CD14-positive monocyte (primary cell): ENCODE measurements at regions of chr12 and their contacts with region 1.

Region 1: DNA sequence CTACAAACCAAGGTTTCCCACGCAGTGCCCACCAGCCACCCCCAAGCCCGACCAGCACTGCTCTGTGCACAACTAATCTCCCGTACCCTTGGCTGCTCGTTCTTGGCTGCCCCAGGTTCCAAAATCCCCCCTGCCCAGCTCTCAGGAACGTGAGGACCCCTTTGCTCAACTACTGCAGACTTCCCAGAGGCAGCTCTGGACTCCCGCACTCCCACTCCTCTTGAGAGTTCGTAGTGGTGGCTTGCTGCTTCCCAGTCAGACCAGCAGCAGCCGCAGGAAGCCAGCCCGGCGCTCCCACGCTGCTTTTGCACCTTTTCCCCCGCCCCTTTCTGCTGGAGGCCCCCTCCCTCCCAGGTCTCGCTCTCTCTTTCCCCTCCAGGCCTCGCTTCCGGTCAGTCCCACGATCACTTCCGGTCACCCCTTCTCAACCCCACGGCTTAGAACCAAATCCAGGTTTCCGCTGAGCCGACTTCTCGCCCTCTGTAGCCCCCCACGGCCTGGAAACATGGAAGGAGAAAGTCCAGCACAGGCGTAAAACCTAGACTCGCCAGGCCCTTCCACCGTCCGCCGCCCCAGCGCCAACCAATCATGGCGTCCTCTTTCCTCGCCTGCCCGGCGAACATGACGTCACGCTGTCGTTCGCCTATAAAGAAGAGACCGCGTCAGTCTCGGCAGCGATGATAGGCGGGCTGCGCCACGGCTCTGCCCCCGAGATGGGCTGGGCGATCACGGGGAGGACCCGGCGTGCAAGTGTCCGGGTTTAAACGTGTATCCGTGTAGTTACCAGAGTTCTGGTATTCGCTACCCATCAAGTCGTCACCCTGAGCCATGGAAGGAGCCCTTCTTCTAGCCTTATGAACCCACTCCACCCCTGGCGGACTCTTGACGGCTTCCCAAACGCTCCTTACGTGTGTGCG is at the start of gene TFCP2:
- DNase-seq: peak; percentile 96 to 97 (median 97)
- H3K4me3 ChIP-seq: peak within 1 kb of the TSS; percentile 51 to 98 (median 66)
- H3K4me3 Mint-ChIP-seq: no peak within 1 kb of the TSS
- H3K27ac ChIP-seq: peak within 1 kb of the TSS; percentile 92 to 100
- H3K27ac Mint-ChIP-seq: no peak within 1 kb of the TSS
- H3K4me1 ChIP-seq: peaks cover 33 to 35% of the 10 kb centered on the region in 2 donors
- H3K4me1 Mint-ChIP-seq: peaks cover 18% of the 10 kb centered on the region
- H3K27me3 ChIP-seq: no peaks in the 10 kb centered on the region
- H3K27me3 Mint-ChIP-seq: no peaks in the 10 kb centered on the region
- CTCF ChIP-seq: no peak
- polyA plus RNA-seq, gene TFCP2: 7.1 to 25.4 (median 14.2) TPM

Region 2: DNA sequence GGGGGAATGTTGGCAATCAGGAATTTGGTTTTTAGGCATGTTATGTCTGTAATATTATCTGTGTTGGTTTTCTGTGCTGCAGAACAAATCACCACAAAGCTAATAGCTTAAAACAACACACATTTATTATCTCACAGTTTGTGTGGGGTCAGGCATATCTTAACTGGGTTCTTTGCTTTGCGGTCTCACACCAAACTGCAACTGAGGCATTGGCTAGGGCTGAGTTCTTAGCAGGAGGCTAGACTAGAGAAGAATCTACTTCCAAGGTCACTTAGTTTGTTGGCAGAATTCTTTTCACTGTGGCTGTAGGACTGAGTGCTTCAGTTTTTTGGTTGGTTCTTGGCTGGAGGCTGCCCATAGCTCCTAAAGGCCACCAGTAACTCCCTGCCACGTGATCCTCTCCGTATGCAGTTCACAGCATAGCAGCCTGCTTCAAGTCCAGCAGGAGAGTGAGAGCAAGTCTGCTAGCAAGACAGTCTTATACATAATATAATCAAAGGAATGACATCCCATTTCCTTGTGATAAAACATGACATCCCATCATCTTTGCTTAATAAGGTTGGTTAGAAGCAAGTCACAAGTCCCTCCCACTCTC is 387.3 kb before region 1 on chr12:
- intact Hi-C with region 1: no loop called
- DNase-seq: no peak
- H3K4me3 ChIP-seq: no peak overlapping the region
- H3K4me3 Mint-ChIP-seq: no peak overlapping the region
- H3K27ac ChIP-seq: no peak overlapping the region
- H3K27ac Mint-ChIP-seq: peak overlapping the region in 1 of 7 donors; percentile 30
- H3K4me1 ChIP-seq: no peaks in the 10 kb centered on the region
- H3K4me1 Mint-ChIP-seq: peaks cover 7% of the 10 kb centered on the region
- H3K27me3 ChIP-seq: no peaks in the 10 kb centered on the region
- H3K27me3 Mint-ChIP-seq: no peaks in the 10 kb centered on the region
- CTCF ChIP-seq: no peak

Region 3: GRCh38 chr12:51047655-51048540 is 124.9 kb before region 1 on chr12 and contains the start of gene LETMD1:
- intact Hi-C with region 1: loop called (anchors 5 to 10 kb)
- DNase-seq: peak; percentile 94 to 98 (median 97)
- H3K4me3 ChIP-seq: peak within 1 kb of the TSS; percentile 67 to 88 (median 85)
- H3K4me3 Mint-ChIP-seq: peak within 1 kb of the TSS; percentile 93 to 98
- H3K27ac ChIP-seq: peak within 1 kb of the TSS; percentile 90
- H3K27ac Mint-ChIP-seq: peak within 1 kb of the TSS; percentile 87 to 97 (median 94)
- H3K4me1 ChIP-seq: peaks cover 18 to 22% of the 10 kb centered on the region in 2 donors
- H3K4me1 Mint-ChIP-seq: peaks cover 19% of the 10 kb centered on the region
- H3K27me3 ChIP-seq: no peaks in the 10 kb centered on the region
- H3K27me3 Mint-ChIP-seq: peaks cover 0 to 5% (median 0%) of the 10 kb centered on the region in 3 donors
- CTCF ChIP-seq: peak; percentile 92
- polyA plus RNA-seq, gene LETMD1: 13.2 to 95.6 (median 16.8) TPM

Region 4: GRCh38 chr12:51238510-51239334 is 65.9 kb after region 1 on chr12 and contains the start of gene DAZAP2:
- intact Hi-C with region 1: loop called (anchors 10 kb)
- DNase-seq: peak; percentile 95 to 97 (median 96)
- H3K4me3 ChIP-seq: peak within 1 kb of the TSS; percentile 65 to 94 (median 93)
- H3K4me3 Mint-ChIP-seq: peak within 1 kb of the TSS; percentile 92 to 97
- H3K27ac ChIP-seq: peak within 1 kb of the TSS; percentile 99 to 100
- H3K27ac Mint-ChIP-seq: peak within 1 kb of the TSS; percentile 97 to 100 (median 100)
- H3K4me1 ChIP-seq: peaks cover 48 to 51% of the 10 kb centered on the region in 2 donors
- H3K4me1 Mint-ChIP-seq: peaks cover 43% of the 10 kb centered on the region
- H3K27me3 ChIP-seq: no peaks in the 10 kb centered on the region
- H3K27me3 Mint-ChIP-seq: peaks cover 0 to 2% (median 2%) of the 10 kb centered on the region in 3 donors
- CTCF ChIP-seq: peak; percentile 20
- polyA plus RNA-seq, gene DAZAP2: 975 to 2,004 (median 1,697) TPM

Region 5: DNA sequence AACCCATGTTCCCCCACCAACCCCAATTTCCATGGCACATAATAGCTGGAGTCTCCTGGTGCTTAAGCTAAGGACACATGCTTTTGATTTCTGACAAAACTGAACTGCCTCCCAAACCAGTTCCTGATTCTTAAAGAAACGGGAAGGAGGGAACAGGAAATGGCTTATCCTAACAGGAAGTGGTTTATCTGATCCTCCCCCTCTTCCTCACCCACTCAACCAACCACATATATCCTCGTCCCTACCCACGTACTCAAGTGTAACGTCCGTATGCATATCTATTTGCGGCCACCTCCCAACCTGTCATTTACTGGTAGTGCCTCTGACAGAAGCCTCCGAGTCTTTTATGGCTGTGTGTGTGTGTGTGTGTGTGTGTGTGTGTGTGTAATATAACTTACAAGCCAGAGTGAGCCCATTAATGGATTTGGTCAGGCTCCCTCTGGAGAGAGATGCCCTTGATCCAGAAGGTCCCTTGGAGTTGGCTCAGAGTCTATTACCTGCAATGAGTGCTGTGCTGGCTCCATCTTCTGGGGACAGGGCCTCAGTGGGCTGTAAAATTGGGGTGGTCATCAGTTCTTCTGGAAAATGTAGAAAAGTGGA is 73.6 kb after region 1 on chr12:
- intact Hi-C with region 1: loop called in 1 of 2 experiments (anchors 10 kb)
- DNase-seq: peak; percentile 84 to 89 (median 86)
- H3K4me3 ChIP-seq: peak overlapping the region; percentile 1 to 68 (median 24)
- H3K4me3 Mint-ChIP-seq: peak overlapping the region; percentile 39 to 77
- H3K27ac ChIP-seq: peak overlapping the region; percentile 29 to 74
- H3K27ac Mint-ChIP-seq: peak overlapping the region; percentile 90 to 98 (median 97)
- H3K4me1 ChIP-seq: peaks cover 86 to 88% of the 10 kb centered on the region in 2 donors
- H3K4me1 Mint-ChIP-seq: peaks cover 70% of the 10 kb centered on the region
- H3K27me3 ChIP-seq: no peaks in the 10 kb centered on the region
- H3K27me3 Mint-ChIP-seq: peaks cover 0 to 2% (median 0%) of the 10 kb centered on the region in 3 donors
- CTCF ChIP-seq: no peak